AG04449 (cell line): ENCODE measurements at regions of chr7 and their contacts with region 1.

Region 1: DNA sequence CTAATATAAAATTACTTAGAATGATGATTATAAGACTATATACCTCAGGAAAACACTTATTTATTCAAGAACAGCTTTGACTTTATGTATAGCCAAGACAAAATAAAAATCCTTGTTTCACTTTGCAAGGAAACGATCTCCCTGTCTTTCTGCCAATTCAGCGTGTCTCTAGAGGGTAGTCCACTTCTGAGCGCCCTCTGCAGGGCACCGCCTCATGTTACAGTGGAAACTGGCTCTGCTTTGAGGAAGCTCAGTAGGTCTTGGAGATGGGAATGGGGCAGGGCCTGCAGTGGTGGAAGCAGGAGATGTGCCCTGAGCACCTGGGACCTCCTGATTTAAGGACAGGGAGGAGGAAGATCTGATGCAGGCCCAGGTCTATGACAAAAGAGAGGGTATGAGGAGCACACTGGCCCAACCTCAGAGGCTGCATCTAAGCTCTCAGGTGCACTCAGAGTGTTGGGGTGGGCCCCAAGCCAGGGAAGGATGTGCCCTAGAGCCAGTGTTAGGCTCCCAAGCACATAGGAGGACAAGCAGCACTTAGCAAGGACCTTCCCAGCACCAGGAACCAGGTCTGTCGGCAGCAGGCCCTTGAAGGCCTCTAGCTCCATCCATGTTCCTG is 481.0 kb downstream of the TNS3 start:
- DNase-seq: no peak
- H3K4me3 ChIP-seq: no peak overlapping the region
- CTCF ChIP-seq: peak; percentile 67

Region 2: DNA sequence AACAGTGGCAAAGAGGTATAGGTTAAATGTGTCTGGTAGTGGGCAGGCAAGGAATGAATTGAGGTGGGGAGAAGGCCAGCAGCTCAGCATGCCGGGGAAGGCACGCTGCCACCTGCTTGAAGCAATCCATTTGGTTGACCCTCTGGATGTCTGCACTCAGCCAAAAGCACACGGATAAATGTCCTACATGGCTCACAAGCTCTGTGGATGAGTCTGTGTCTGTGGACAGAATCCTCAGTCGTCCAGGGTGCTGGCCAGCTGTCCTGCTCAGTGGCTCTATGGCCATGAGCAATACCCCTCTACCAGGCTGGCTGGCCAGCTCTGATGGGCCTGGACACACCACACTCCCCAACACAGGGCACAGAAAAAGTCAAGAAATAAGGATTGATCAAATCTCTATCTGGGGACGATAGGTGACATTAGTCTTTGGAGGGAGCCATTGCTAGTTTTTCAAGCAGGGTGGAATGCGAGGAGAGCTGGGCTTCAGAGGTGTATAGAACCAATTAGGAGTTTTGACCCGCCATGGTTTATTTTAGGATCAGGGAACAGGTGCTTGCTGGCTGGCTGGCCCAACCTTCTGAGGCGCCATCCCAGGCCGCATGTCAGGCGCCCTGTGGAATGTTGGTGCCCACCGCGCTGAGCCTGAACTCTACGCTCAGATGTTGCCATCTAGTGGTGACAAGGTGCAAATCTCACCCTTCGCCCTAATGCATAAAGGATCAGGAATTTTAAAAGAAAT is 12.4 kb before region 1 on chr7:
- CTCF ChIA-PET with region 1: interaction called, 10 read pairs
- POLR2A ChIA-PET with region 1: no interaction called
- DNase-seq: no peak
- H3K4me3 ChIP-seq: no peak overlapping the region
- CTCF ChIP-seq: peak; percentile 66

Region 3: DNA sequence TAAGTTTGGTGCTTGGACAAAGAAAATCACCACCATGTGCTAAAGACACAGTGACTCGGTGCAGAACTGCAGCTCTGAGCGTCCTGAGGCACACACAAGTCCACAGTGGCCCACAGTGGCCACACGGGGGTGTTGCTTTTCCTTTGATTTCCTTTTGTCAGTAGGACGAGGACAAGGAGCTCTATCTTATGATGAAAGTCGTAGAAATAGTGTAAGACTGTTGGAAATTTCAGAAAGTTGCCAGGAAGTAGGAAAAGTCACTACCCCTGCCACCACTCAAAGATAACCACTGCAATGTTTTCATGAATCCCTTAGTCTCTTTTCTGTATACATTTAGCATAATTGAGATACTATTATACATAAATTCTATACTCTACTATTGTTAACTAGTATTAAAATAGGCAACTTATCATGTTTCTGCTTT is 335.0 kb after region 1 on chr7:
- CTCF ChIA-PET with region 1: no interaction called
- POLR2A ChIA-PET with region 1: no interaction called
- DNase-seq: peak; percentile 59
- H3K4me3 ChIP-seq: no peak overlapping the region
- CTCF ChIP-seq: peak; percentile 75